Activated CD4-positive, alpha-beta T cell treated with anti-CD3 and anti-CD28 coated beads, Interleukin-2, amount 10 ng/mL, durations not matched to agents 24 days and 14 days (primary cell): ENCODE measurements at regions of chr15 and their contacts with region 1.

Region 1: GRCh38 chr15:86647810-86648440 is 568.3 kb downstream of the AGBL1 start:
- DNase-seq: no peak
- H3K4me3 Mint-ChIP-seq: no peak overlapping the region
- H3K27ac Mint-ChIP-seq: no peak overlapping the region
- H3K4me1 Mint-ChIP-seq: peaks cover 7% of the 10 kb centered on the region
- H3K27me3 Mint-ChIP-seq: no peaks in the 10 kb centered on the region

Region 2: GRCh38 chr15:86611417-86612040 is 36.4 kb before region 1 on chr15:
- intact Hi-C with region 1: loop called (anchors 1 kb)
- DNase-seq: peak; percentile 80
- H3K4me3 Mint-ChIP-seq: peak overlapping the region; percentile 49
- H3K27ac Mint-ChIP-seq: peak overlapping the region; percentile 81
- H3K4me1 Mint-ChIP-seq: peaks cover 45% of the 10 kb centered on the region
- H3K27me3 Mint-ChIP-seq: no peaks in the 10 kb centered on the region

Region 3: DNA sequence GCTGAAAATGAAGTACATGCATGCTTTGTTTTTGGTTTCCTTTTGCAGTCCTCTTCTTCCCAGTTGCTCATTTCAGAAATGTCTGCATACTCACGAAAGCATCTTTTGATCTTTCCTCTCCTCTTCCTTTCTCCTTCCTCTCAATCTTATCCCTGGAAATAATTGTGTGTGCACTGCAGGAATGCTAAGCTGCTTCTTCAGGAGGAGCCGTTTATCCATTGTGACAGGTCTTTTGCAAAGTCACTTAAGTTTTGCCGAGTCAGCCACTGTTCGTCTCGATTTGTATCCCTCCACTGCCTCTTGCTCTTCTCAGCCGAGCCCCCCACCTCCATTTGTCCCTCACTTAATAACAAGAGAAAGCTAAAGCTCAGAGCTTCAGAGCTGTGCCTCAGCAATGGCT is 29.4 kb after region 1 on chr15:
- intact Hi-C with region 1: no loop called
- DNase-seq: no peak
- H3K4me3 Mint-ChIP-seq: peak overlapping the region; percentile 16
- H3K27ac Mint-ChIP-seq: no peak overlapping the region
- H3K4me1 Mint-ChIP-seq: no peaks in the 10 kb centered on the region
- H3K27me3 Mint-ChIP-seq: peaks cover 5% of the 10 kb centered on the region

Region 4: DNA sequence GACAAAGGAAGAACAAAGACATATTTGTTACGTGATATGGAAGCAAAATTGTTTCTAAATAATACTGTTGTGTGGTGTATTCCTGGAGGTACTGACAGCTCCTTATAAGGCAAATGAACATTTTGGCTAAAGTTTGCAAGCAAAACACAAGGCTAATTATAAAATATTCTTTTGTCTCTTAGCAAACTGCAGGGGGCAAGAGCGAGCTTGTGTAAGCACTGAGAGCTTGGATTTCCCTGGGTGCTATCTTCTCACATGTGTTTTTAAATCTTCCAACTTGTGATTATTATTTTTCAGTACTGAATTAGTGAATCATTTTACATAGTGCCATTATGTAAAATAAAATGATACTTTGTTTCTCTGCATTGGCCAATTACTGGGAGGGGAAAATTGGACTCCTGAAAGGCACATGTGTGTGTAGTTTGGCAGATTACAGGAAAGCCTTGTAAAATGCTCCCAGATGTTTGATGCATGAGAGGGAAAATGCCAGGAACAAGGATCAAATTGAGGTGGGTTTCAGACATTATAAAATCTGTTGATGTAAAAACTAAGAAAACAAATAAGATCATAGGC is 43.3 kb after region 1 on chr15:
- intact Hi-C with region 1: loop called (anchors 2 kb)
- DNase-seq: no peak
- H3K4me3 Mint-ChIP-seq: no peak overlapping the region
- H3K27ac Mint-ChIP-seq: no peak overlapping the region
- H3K4me1 Mint-ChIP-seq: peaks cover 2% of the 10 kb centered on the region
- H3K27me3 Mint-ChIP-seq: peaks cover 2% of the 10 kb centered on the region